ENCODE measurements at regions of chr11 and their contacts with region 1.

Region 1: GRCh38 chr11:79864882-79865281 is 424.1 kb upstream of the TENM4 start:
- DNase-seq: no peak
- ATAC-seq: no peak
- H3K4me3 ChIP-seq: no peak overlapping the region
- H3K4me3 Mint-ChIP-seq: no peak overlapping the region
- H3K27ac ChIP-seq: no peak overlapping the region
- H3K27ac Mint-ChIP-seq: no peak overlapping the region
- H3K4me1 ChIP-seq: no peaks in the 10 kb centered on the region
- H3K4me1 Mint-ChIP-seq: no peaks in the 10 kb centered on the region
- H3K27me3 ChIP-seq: no peaks in the 10 kb centered on the region
- H3K27me3 Mint-ChIP-seq: no peaks in the 10 kb centered on the region
- CTCF ChIP-seq: no peak

Region 2: DNA sequence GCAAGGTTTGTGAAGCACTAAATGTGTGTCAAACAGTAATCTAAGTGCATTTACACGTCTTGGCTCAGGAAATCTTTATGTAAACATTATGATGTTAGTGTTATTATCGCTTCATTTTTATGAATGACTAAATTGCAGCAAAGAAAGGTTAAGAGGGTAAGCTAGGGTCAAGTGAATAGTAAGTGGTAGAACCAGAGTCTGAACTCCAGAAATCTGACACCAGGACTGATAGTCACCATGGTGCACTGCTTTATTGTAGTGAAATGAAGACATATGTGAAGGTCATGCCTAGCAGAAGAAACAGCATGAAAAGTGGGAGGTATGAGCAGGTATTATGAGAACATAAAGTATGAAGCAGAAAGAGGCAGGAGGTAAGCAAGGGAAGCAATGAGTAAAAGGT is 55.4 kb before region 1 on chr11:
- CTCF ChIA-PET with region 1: no interaction called
- POLR2A ChIA-PET with region 1: no interaction called
- intact Hi-C with region 1: loop called in 1 of 2 experiments (anchors 10 kb)
- DNase-seq: no peak
- ATAC-seq: no peak
- H3K4me3 ChIP-seq: no peak overlapping the region
- H3K4me3 Mint-ChIP-seq: no peak overlapping the region
- H3K27ac ChIP-seq: no peak overlapping the region
- H3K27ac Mint-ChIP-seq: no peak overlapping the region
- H3K4me1 ChIP-seq: no peaks in the 10 kb centered on the region
- H3K4me1 Mint-ChIP-seq: no peaks in the 10 kb centered on the region
- H3K27me3 ChIP-seq: no peaks in the 10 kb centered on the region
- H3K27me3 Mint-ChIP-seq: no peaks in the 10 kb centered on the region
- CTCF ChIP-seq: no peak

Region 3: GRCh38 chr11:79834015-79834414 is 30.9 kb before region 1 on chr11:
- CTCF ChIA-PET with region 1: no interaction called
- POLR2A ChIA-PET with region 1: no interaction called
- intact Hi-C with region 1: no loop called
- DNase-seq: no peak
- ATAC-seq: no peak
- H3K4me3 ChIP-seq: no peak overlapping the region
- H3K4me3 Mint-ChIP-seq: no peak overlapping the region
- H3K27ac ChIP-seq: no peak overlapping the region
- H3K27ac Mint-ChIP-seq: no peak overlapping the region
- H3K4me1 ChIP-seq: no peaks in the 10 kb centered on the region
- H3K4me1 Mint-ChIP-seq: no peaks in the 10 kb centered on the region
- H3K27me3 ChIP-seq: no peaks in the 10 kb centered on the region
- H3K27me3 Mint-ChIP-seq: peaks cover 3% of the 10 kb centered on the region
- CTCF ChIP-seq: no peak

Region 4: DNA sequence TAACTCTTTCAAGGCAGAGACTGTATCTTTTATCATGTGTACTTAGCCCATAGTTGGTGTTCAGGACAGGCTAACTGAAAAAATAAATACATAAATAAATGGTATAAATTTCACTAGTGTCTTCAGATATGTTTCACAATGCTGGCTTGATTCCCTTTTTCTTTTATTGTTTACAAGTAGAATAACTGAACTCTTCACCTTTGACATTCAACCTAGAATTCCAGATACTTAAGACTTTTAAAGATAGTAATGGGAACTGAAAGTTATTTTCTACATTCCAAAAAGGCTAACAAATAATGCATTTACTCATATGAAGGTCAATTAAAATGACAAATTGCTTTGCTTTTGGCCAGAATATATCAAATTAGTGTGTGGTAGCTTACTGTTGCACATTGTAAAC is 12.7 kb before region 1 on chr11:
- CTCF ChIA-PET with region 1: no interaction called
- POLR2A ChIA-PET with region 1: no interaction called
- intact Hi-C with region 1: no loop called
- DNase-seq: no peak
- ATAC-seq: no peak
- H3K4me3 ChIP-seq: no peak overlapping the region
- H3K4me3 Mint-ChIP-seq: no peak overlapping the region
- H3K27ac ChIP-seq: no peak overlapping the region
- H3K27ac Mint-ChIP-seq: no peak overlapping the region
- H3K4me1 ChIP-seq: no peaks in the 10 kb centered on the region
- H3K4me1 Mint-ChIP-seq: no peaks in the 10 kb centered on the region
- H3K27me3 ChIP-seq: no peaks in the 10 kb centered on the region
- H3K27me3 Mint-ChIP-seq: no peaks in the 10 kb centered on the region
- CTCF ChIP-seq: no peak

Region 5: DNA sequence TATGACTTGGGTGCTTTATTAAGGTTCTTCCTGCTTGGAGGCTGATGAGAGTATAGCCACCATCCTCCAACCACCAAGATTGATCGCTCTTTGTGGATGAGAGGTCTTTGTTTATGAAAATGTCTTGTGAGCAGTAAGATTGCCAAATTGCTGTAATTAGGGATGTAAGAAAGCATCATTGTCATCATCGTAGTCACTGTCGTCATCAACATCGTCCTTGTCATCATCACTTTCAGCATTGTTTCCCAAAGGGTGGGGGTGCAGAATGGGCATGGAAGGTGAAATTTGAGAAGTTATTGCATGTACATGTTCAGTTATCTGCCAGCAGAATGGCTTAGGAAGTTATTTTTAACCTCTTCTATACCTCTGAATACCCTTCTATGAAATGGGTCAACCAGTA is 15.4 kb after region 1 on chr11:
- CTCF ChIA-PET with region 1: no interaction called
- POLR2A ChIA-PET with region 1: no interaction called
- intact Hi-C with region 1: no loop called
- DNase-seq: no peak
- ATAC-seq: no peak
- H3K4me3 ChIP-seq: no peak overlapping the region
- H3K4me3 Mint-ChIP-seq: no peak overlapping the region
- H3K27ac ChIP-seq: no peak overlapping the region
- H3K27ac Mint-ChIP-seq: no peak overlapping the region
- H3K4me1 ChIP-seq: no peaks in the 10 kb centered on the region
- H3K4me1 Mint-ChIP-seq: no peaks in the 10 kb centered on the region
- H3K27me3 ChIP-seq: no peaks in the 10 kb centered on the region
- H3K27me3 Mint-ChIP-seq: no peaks in the 10 kb centered on the region
- CTCF ChIP-seq: no peak

Region 6: GRCh38 chr11:81165164-81165563 is 1300.3 kb after region 1 on chr11:
- CTCF ChIA-PET with region 1: no interaction called
- POLR2A ChIA-PET with region 1: no interaction called
- intact Hi-C with region 1: loop called in 1 of 2 experiments (anchors 10 kb)
- DNase-seq: no peak
- ATAC-seq: no peak
- H3K4me3 ChIP-seq: no peak overlapping the region
- H3K4me3 Mint-ChIP-seq: no peak overlapping the region
- H3K27ac ChIP-seq: no peak overlapping the region
- H3K27ac Mint-ChIP-seq: no peak overlapping the region
- H3K4me1 ChIP-seq: no peaks in the 10 kb centered on the region
- H3K4me1 Mint-ChIP-seq: no peaks in the 10 kb centered on the region
- H3K27me3 ChIP-seq: no peaks in the 10 kb centered on the region
- H3K27me3 Mint-ChIP-seq: no peaks in the 10 kb centered on the region
- CTCF ChIP-seq: no peak